ENCODE measurements at regions of chr12 and their contacts with region 1.

Region 1: DNA sequence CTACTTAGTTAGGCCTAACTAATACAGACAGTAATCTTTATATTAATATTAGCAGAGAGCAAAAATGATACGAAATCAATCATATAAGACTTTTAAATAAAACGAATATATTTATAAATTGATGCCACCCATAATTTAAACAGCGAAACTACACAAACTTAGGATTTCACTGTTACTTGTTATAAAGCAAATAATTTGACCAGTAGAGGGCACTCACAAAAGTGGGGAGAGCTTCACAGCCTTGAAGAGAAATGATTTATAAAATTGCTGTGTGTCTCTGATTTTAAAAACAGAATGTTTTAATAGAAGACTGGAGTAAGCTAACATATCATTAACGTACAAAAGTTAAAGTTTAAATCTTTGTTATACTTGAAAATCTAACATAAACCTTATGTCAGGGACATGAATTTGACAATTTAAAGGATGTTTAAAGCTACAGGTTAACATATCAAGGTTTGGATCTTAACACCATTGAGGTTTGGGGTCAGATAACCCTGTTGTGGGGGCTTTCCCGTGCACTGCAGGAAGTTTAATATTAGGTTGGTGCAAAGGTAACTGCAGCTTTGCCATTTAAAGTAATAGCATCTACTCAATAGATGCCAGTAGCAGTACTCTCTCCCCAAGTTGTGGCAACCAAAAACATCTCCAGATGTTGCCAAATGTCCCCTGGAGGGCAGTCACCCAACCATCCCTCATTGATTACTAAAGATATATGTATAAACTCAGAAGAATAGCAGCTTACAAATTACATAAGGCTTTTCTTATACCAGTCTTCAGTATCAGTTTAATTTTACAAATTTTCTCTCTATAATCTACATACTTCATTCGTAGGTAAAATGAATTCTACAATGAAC is 9.3 kb downstream of the KRAS start:
- H3K4me3 Mint-ChIP-seq: no peak overlapping the region
- H3K27ac Mint-ChIP-seq: no peak overlapping the region
- H3K4me1 Mint-ChIP-seq: peaks cover 19% of the 10 kb centered on the region
- H3K27me3 Mint-ChIP-seq: no peaks in the 10 kb centered on the region

Region 2: GRCh38 chr12:25386831-25387731 is 145.7 kb after region 1 on chr12:
- intact Hi-C with region 1: loop called (anchors 1 kb)
- H3K4me3 Mint-ChIP-seq: peak overlapping the region; percentile 89
- H3K27ac Mint-ChIP-seq: peak overlapping the region; percentile 100
- H3K4me1 Mint-ChIP-seq: peaks cover 39% of the 10 kb centered on the region
- H3K27me3 Mint-ChIP-seq: peaks cover 4% of the 10 kb centered on the region

Measured in dendritic cell treated with granulocyte-macrophage colony-stimulating factor and Interleukin-4, amounts not matched to agents 40 ng/mL and 50 ng/mL, for 4 days (primary cell).